H1 (cell line): ENCODE measurements at regions of chr14 and their contacts with region 1.

Region 1: GRCh38 chr14:77980475-77981321 is 180.8 kb downstream of the ADCK1 start:
- DNase-seq: peak in 1 of 2 experiments; percentile 80
- H3K4me3 ChIP-seq: peak overlapping the region; percentile 42 to 70 (median 62)
- H3K27ac ChIP-seq: no peak overlapping the region
- H3K4me1 ChIP-seq: peaks cover 5 to 12% (median 10%) of the 10 kb centered on the region in 4 experiments; a peak in 6 of 7 replicates
- H3K27me3 ChIP-seq: no peaks in the 10 kb centered on the region; a peak in 1 of 7 replicates
- CTCF ChIP-seq: no peak
- EP300 ChIP-seq: no peak
- POLR2A ChIP-seq: no peak
- RAD21 ChIP-seq: no peak

Region 2: DNA sequence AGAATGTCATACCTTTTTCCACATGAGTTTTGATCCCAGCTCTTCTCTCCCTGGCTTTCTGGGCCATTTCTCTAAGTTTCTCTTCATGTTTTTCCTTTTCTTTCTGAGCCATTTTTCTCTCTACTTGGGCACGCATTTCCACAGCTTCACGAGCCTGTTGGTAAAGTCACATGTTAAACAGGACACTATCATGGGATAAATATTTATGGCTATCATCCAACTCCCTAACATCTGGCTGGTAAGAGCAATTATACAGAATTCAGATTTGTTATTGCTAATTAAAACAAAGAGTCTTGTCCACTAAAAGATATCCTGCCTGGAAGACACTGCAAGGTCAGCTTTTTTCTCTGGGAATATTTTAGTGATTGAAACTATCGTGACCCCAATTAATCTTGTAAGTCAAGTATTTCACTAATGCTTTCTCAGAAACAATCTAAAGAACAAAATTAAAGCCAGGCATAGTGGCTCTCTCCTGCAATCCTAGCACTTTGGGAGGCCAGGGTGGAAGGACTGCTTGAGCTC is 249.7 kb before region 1 on chr14:
- CTCF ChIA-PET with region 1: no interaction called
- POLR2A ChIA-PET with region 1: no interaction called
- DNase-seq: no peak
- H3K4me3 ChIP-seq: no peak overlapping the region
- H3K27ac ChIP-seq: no peak overlapping the region
- H3K4me1 ChIP-seq: no peaks in the 10 kb centered on the region
- H3K27me3 ChIP-seq: no peaks in the 10 kb centered on the region
- CTCF ChIP-seq: no peak
- EP300 ChIP-seq: no peak
- POLR2A ChIP-seq: no peak
- RAD21 ChIP-seq: no peak

Region 3: GRCh38 chr14:77965919-77966435 is 14.7 kb before region 1 on chr14:
- CTCF ChIA-PET with region 1: interaction called, 14 read pairs
- POLR2A ChIA-PET with region 1: no interaction called
- DNase-seq: peak; percentile 10 to 73
- H3K4me3 ChIP-seq: peak overlapping the region; percentile 40 to 61 (median 48)
- H3K27ac ChIP-seq: no peak overlapping the region
- H3K4me1 ChIP-seq: peaks cover 0 to 3% (median 1%) of the 10 kb centered on the region in 4 experiments; a peak in 2 of 7 replicates
- H3K27me3 ChIP-seq: peaks cover 0 to 9% (median 6%) of the 10 kb centered on the region in 4 experiments; a peak in 3 of 7 replicates
- CTCF ChIP-seq: 0 out of 4 replicates have a peak, but pooled peaks of 1 of the 3 experiments have one; percentile 2
- EP300 ChIP-seq: peak in 1 of 2 experiments; percentile 23; a peak in 1 of 3 replicates
- POLR2A ChIP-seq: no peak
- RAD21 ChIP-seq: 0 out of 4 replicates have a peak, but pooled peaks of 1 of the 2 experiments have one; percentile 10